ENCODE measurements at regions of chr5 and their contacts with region 1.

Region 1: GRCh38 chr5:132410451-132411381 is 41.2 kb downstream of the SLC22A5 start:
- DNase-seq: peak; percentile 61 to 93 (median 80)
- ATAC-seq: peak; percentile 66
- H3K4me3 ChIP-seq: peak overlapping the region; percentile 73 to 94
- H3K4me3 Mint-ChIP-seq: peak overlapping the region; percentile 95
- H3K27ac ChIP-seq: peak overlapping the region; percentile 96 to 98
- H3K27ac Mint-ChIP-seq: peak overlapping the region; percentile 98
- H3K4me1 ChIP-seq: peaks cover 79% of the 10 kb centered on the region
- H3K4me1 Mint-ChIP-seq: peaks cover 80% of the 10 kb centered on the region
- H3K27me3 ChIP-seq: no peaks in the 10 kb centered on the region
- H3K27me3 Mint-ChIP-seq: no peaks in the 10 kb centered on the region
- CTCF ChIP-seq: peak; percentile 44

Region 2: GRCh38 chr5:131198625-131199024 is 1212.1 kb before region 1 on chr5:
- CTCF ChIA-PET with region 1: no interaction called
- POLR2A ChIA-PET with region 1: no interaction called
- intact Hi-C with region 1: no loop called
- DNase-seq: no peak
- ATAC-seq: no peak
- H3K4me3 ChIP-seq: no peak overlapping the region
- H3K4me3 Mint-ChIP-seq: no peak overlapping the region
- H3K27ac ChIP-seq: no peak overlapping the region
- H3K27ac Mint-ChIP-seq: no peak overlapping the region
- H3K4me1 ChIP-seq: no peaks in the 10 kb centered on the region
- H3K4me1 Mint-ChIP-seq: peaks cover 10% of the 10 kb centered on the region
- H3K27me3 ChIP-seq: no peaks in the 10 kb centered on the region
- H3K27me3 Mint-ChIP-seq: no peaks in the 10 kb centered on the region
- CTCF ChIP-seq: no peak

Region 3: GRCh38 chr5:132466433-132467286 is 55.9 kb after region 1 on chr5:
- CTCF ChIA-PET with region 1: interaction called, 16 read pairs
- POLR2A ChIA-PET with region 1: interaction called, 40 read pairs
- intact Hi-C with region 1: no loop called
- DNase-seq: peak; percentile 53 to 92 (median 74)
- ATAC-seq: peak; percentile 63
- H3K4me3 ChIP-seq: peak overlapping the region; percentile 25 to 28
- H3K4me3 Mint-ChIP-seq: peak overlapping the region; percentile 68
- H3K27ac ChIP-seq: peak overlapping the region; percentile 51 to 85
- H3K27ac Mint-ChIP-seq: peak overlapping the region; percentile 95
- H3K4me1 ChIP-seq: peaks cover 88% of the 10 kb centered on the region
- H3K4me1 Mint-ChIP-seq: peaks cover 96% of the 10 kb centered on the region
- H3K27me3 ChIP-seq: no peaks in the 10 kb centered on the region
- H3K27me3 Mint-ChIP-seq: no peaks in the 10 kb centered on the region
- CTCF ChIP-seq: no peak

Region 4: DNA sequence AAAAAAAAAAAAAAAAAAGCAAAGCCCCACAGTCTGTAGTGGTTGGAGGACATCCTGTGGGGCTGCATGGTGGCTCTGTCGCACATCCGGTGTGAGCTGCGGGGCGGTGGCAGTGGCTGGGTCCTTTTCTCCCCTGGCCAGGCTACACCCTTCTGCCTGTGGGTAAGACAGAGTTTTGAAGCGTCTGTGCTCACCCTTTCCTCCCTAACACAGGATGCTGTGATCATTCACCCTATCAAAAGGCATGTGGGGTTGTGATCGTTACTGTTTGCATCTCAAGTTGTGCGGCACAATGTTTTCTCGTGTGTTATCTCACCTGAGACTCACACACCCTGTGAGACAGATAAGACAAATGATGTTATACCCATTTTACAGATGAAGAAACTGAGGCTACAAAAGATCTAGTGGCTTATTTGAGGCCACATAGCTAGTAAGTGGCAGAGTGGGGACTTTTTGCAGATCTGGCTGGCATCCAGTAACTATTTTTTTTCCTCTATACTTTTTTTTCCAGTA is 62.4 kb after region 1 on chr5:
- CTCF ChIA-PET with region 1: interaction called, 16 read pairs
- POLR2A ChIA-PET with region 1: interaction called, 25 read pairs
- intact Hi-C with region 1: no loop called
- DNase-seq: peak; percentile 70 to 97 (median 85)
- ATAC-seq: peak; percentile 73
- H3K4me3 ChIP-seq: no peak overlapping the region
- H3K4me3 Mint-ChIP-seq: peak overlapping the region; percentile 5
- H3K27ac ChIP-seq: peak overlapping the region; percentile 52 to 93
- H3K27ac Mint-ChIP-seq: peak overlapping the region; percentile 87
- H3K4me1 ChIP-seq: peaks cover 82% of the 10 kb centered on the region
- H3K4me1 Mint-ChIP-seq: peaks cover 92% of the 10 kb centered on the region
- H3K27me3 ChIP-seq: no peaks in the 10 kb centered on the region
- H3K27me3 Mint-ChIP-seq: no peaks in the 10 kb centered on the region
- CTCF ChIP-seq: no peak

Region 5: DNA sequence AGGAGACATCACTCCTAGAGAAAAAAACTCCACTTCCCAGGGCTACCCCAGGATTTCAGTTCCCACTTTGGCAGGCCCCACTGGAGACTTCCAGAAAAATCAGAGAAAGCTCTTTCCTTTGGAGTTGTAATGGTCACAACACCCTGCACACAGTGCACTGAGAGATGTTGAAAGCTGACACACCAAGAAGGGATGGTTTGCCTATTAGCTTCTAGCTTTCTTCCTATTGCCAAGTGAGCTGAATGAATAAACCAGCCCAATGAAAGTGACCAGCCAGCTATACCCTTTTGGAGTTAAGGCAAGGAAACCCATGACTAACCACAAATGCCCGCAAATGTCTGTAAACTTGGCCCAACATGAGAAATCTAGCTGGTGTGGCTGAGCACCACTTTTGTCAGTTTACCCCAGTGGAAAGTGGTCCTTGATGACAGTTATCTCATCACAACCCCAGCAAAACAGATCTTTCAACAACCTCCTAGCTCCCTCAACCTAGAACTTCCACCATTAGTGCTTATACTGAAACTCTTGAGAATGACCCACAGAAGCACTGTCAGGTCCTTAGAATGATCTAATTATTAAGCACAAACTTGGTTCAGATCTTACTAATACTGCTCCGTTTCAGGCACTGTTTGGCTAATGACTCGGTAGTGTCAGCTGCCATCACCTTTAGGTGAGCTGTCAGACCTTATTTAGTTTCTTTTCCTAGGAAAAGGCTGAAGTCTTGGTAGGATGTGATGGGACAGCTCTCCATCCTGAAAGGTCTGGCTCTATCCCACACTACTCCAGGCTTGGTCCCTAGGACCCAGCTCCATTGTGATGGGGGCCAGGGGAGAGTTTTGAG is 68.6 kb after region 1 on chr5:
- CTCF ChIA-PET with region 1: interaction called, 10 read pairs
- POLR2A ChIA-PET with region 1: interaction called, 25 read pairs
- intact Hi-C with region 1: no loop called
- DNase-seq: peak in 3 of 9 experiments; percentile 27 to 55 (median 35)
- ATAC-seq: no peak
- H3K4me3 ChIP-seq: no peak overlapping the region
- H3K4me3 Mint-ChIP-seq: peak overlapping the region; percentile 8
- H3K27ac ChIP-seq: peak overlapping the region in 1 of 2 experiments; percentile 93
- H3K27ac Mint-ChIP-seq: peak overlapping the region; percentile 91
- H3K4me1 ChIP-seq: peaks cover 66% of the 10 kb centered on the region
- H3K4me1 Mint-ChIP-seq: peaks cover 72% of the 10 kb centered on the region
- H3K27me3 ChIP-seq: no peaks in the 10 kb centered on the region
- H3K27me3 Mint-ChIP-seq: no peaks in the 10 kb centered on the region
- CTCF ChIP-seq: no peak

Region 6: DNA sequence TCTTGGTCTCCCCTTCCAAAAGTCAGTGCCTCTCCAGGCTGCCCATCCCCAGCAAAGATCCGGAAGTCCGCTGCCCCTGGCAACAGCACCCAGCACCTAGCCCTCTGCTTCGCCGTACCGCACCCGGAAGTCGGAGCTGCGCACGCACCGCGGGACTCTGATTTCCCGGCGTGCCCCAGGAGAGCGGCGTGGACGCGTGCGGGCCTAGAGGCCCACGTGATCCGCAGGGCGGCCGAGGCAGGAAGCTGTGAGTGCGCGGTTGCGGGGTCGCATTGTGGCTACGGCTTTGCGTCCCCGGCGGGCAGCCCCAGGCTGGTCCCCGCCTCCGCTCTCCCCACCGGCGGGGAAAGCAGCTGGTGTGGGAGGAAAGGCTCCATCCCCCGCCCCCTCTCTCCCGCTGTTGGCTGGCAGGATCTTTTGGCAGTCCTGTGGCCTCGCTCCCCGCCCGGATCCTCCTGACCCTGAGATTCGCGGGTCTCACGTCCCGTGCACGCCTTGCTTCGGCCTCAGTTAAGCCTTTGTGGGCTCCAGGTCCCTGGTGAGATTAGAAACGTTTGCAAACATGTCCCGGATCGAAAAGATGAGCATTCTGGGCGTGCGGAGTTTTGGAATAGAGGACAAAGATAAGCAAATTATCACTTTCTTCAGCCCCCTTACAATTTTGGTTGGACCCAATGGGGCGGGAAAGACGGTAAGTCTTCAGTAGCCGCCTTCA is 146.2 kb after region 1 on chr5 and contains the start of gene RAD50:
- CTCF ChIA-PET with region 1: no interaction called
- POLR2A ChIA-PET with region 1: interaction called, 4 read pairs
- intact Hi-C with region 1: loop called (anchors 5 kb)
- DNase-seq: peak; percentile 83 to 96 (median 91)
- ATAC-seq: peak; percentile 95
- H3K4me3 ChIP-seq: peak within 1 kb of the TSS; percentile 62 to 97
- H3K4me3 Mint-ChIP-seq: peak within 1 kb of the TSS; percentile 98
- H3K27ac ChIP-seq: peak within 1 kb of the TSS; percentile 68 to 91
- H3K27ac Mint-ChIP-seq: peak within 1 kb of the TSS; percentile 98
- H3K4me1 ChIP-seq: peaks cover 21% of the 10 kb centered on the region
- H3K4me1 Mint-ChIP-seq: peaks cover 28% of the 10 kb centered on the region
- H3K27me3 ChIP-seq: no peaks in the 10 kb centered on the region
- H3K27me3 Mint-ChIP-seq: no peaks in the 10 kb centered on the region
- CTCF ChIP-seq: no peak
- total RNA-seq, gene RAD50: 8.0 to 8.7 TPM

Measured in CD8-positive, alpha-beta T cell (primary cell).